ENCODE measurements at regions of chr10 and their contacts with region 1.

Region 1: DNA sequence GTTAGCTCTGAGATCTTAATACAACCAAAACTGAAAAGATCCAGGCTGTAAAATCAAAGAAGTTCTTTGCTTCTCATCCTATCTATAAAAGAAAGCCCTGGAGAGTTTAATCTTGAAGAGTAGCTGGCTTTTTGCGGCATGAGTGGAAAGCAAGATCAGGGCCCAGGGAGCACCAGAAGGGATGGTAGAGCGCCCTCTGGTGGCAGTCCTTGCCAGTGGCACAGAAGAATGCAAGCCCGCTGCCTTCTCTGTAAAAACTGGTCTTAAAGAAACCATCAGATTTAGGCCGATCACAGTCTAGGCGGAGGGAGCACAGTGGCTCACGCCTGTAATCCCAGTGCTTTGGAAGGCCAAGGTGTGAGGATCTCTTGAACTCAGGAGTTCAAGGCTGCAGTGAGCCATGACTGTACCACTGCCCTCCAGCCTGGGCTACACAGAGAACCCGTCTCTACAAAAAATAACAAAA is 35.6 kb downstream of the CPN1 start:
- DNase-seq: peak; percentile 78 to 96 (median 87)
- ATAC-seq: peak; percentile 91
- H3K4me3 ChIP-seq: no peak overlapping the region
- H3K4me1 ChIP-seq: peaks cover 2% of the 10 kb centered on the region
- CTCF ChIP-seq: peak; percentile 95

Region 2: DNA sequence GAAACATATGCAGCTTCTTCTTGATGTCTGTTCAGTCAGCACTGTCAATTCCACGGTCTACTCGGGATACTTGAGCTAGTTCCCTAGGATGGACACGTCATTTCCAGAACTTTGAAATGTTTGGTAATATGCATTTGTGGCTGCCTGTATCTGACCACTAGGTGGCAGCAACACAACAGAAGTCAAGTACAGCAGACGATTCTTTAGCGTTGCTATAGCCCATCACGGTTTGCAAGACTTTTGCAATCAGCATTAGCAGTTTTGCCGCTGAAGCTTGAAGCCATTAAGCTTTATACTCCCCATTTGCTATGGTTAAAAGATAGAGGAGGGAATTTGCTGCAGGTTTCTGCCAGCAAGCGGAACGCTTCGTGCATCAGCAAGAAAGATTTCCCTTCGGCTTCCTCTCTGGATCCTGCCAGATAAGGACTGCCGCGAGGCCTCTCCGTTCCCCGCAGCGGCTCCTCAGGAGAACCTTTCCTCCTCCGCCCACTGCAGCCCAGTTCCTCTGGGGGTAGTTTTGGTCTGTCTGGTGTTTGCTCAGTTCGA is 200.1 kb before region 1 on chr10:
- intact Hi-C with region 1: loop called (anchors 5 kb)
- DNase-seq: peak in 2 of 3 donors; percentile 39 to 91
- ATAC-seq: peak; percentile 93
- H3K4me3 ChIP-seq: no peak overlapping the region
- H3K4me1 ChIP-seq: no peaks in the 10 kb centered on the region
- CTCF ChIP-seq: peak; percentile 89

Region 3: GRCh38 chr10:100114976-100115770 is 69.1 kb after region 1 on chr10:
- intact Hi-C with region 1: no loop called
- DNase-seq: no peak
- ATAC-seq: no peak
- H3K4me3 ChIP-seq: no peak overlapping the region
- H3K4me1 ChIP-seq: no peaks in the 10 kb centered on the region
- CTCF ChIP-seq: no peak

Measured in mucosa of descending colon (tissue), 3 donors.